Uterus (tissue), 4 donors: ENCODE measurements at regions of chr9 and their contacts with region 1.

Region 1: DNA sequence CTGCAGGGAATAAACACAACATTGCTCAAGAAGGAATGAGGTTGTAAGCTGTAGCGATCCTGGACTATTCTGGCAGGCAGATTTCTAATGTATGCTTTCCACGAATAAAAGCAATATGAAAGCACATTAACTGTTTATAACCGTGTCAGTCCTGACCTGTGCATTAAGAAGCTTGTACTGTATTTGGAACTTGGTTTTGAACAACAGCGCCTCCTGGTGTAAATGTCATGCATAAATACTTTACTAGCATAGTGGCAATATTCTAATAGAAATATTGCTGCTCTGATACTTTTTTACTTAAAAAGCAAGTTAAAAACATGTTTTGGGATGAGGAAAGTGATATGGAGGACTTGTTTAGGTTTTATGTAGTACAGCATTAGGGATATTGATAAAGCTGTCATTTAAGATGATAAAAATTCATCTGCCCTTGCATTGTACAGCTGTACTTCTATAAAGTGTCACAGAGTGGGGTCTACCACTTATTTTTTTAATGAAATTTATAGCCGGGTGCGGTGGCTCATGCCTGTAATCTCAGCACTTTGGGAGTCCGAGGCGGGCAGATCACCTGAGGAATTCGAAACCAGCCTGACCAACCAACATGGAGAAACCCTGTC is 70.7 kb upstream of the GNE start:
- DNase-seq: peak in 1 of 2 donors; percentile 48
- H3K4me3 ChIP-seq: no peak overlapping the region
- H3K27ac ChIP-seq: no peak overlapping the region
- H3K4me1 ChIP-seq: no peaks in the 10 kb centered on the region
- H3K27me3 ChIP-seq: no peaks in the 10 kb centered on the region
- CTCF ChIP-seq: peak; percentile 74 to 86 (median 80)
- POLR2A ChIP-seq: no peak

Region 2: GRCh38 chr9:36204906-36205547 is 123.9 kb before region 1 on chr9:
- intact Hi-C with region 1: loop called (anchors 10 kb)
- DNase-seq: no peak
- H3K4me3 ChIP-seq: no peak overlapping the region
- H3K27ac ChIP-seq: no peak overlapping the region
- H3K4me1 ChIP-seq: no peaks in the 10 kb centered on the region
- H3K27me3 ChIP-seq: no peaks in the 10 kb centered on the region
- CTCF ChIP-seq: no peak
- POLR2A ChIP-seq: no peak